GM10248 (cell line): ENCODE measurements at regions of chrX and their contacts with region 1.

Region 1: DNA sequence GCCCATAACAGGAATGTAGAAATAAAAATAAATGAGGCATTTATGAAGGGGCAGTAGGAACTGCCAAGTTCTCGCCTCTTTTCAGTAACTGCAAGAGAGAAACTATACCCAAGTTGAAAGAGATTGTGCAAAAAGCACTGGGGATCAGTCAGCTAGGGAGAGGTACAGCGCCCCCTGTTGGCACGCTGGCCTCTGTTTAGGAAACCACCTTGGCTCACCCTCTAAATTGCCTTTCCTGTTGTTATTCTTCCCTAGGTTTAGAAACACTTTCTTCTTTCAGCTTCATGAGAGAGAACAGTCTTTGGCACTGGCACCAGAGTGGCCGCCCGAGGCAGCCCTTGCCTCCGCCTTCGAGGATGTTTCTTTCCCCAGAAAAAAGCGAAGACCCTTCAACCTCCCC is 348.5 kb downstream of the MID1IP1 start:
- DNase-seq: peak; percentile 41
- CTCF ChIP-seq: peak; percentile 64

Region 2: GRCh38 chrX:38664285-38664684 is 485.5 kb before region 1 on chrX:
- CTCF ChIA-PET with region 1: interaction called, 10 read pairs
- POLR2A ChIA-PET with region 1: no interaction called
- DNase-seq: no peak
- CTCF ChIP-seq: peak; percentile 33

Region 3: DNA sequence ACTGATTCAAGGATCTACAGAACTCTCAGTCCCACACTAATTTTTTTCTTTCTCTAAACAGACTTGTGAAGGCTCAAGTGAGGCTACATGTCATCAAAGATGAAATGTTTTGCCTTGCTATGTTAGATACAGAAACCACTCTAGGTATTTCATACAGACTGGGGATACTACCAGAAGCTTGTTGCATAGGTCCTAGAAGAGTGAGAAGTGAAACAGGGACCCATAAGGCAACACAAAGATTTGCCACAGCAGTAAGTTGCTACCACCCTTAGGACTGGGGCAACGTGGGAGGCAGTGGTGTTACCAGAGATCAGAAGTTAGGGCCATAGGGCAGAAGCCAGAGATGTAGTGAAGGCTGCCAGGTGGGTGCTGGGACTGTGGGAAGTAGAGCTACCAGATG is 399.2 kb before region 1 on chrX:
- CTCF ChIA-PET with region 1: interaction called, 18 read pairs
- POLR2A ChIA-PET with region 1: no interaction called
- DNase-seq: no peak
- CTCF ChIP-seq: no peak

Region 4: GRCh38 chrX:38768079-38768478 is 381.7 kb before region 1 on chrX:
- CTCF ChIA-PET with region 1: interaction called, 47 read pairs
- POLR2A ChIA-PET with region 1: no interaction called
- DNase-seq: peak; percentile 10
- CTCF ChIP-seq: peak; percentile 28

Region 5: GRCh38 chrX:39029221-39029620 is 120.5 kb before region 1 on chrX:
- CTCF ChIA-PET with region 1: no interaction called
- POLR2A ChIA-PET with region 1: no interaction called
- DNase-seq: no peak
- CTCF ChIP-seq: no peak

Region 6: GRCh38 chrX:39112143-39112542 is 37.6 kb before region 1 on chrX:
- CTCF ChIA-PET with region 1: no interaction called
- POLR2A ChIA-PET with region 1: no interaction called
- DNase-seq: no peak
- CTCF ChIP-seq: no peak

Region 7: DNA sequence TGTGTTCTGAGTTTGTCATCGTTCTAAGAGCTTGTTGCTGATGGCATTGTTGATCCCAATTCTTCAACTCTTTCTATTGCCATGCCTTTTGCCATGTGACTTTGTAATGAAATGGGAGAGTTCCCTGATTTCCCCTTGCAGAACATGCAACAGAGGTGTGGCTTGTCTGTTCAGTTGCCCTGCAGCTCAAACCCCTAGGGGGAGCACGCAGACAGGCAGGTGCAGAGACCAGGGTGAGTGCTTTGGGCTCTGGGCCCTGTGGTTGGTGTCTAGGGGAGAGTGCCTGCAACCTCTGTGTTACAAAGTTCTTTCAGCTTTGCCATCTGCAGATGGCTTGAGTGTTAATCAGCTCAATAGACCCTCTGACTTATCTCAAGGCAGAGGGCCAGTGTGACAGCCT is 15.8 kb before region 1 on chrX:
- CTCF ChIA-PET with region 1: interaction called, 16 read pairs
- POLR2A ChIA-PET with region 1: no interaction called
- DNase-seq: no peak
- CTCF ChIP-seq: peak; percentile 41

Region 8: GRCh38 chrX:39162322-39162735 is 12.6 kb after region 1 on chrX:
- CTCF ChIA-PET with region 1: interaction called, 12 read pairs
- POLR2A ChIA-PET with region 1: no interaction called
- DNase-seq: peak; percentile 36
- CTCF ChIP-seq: peak; percentile 34

Region 9: GRCh38 chrX:39189431-39189830 is 39.7 kb after region 1 on chrX:
- CTCF ChIA-PET with region 1: no interaction called
- POLR2A ChIA-PET with region 1: no interaction called
- DNase-seq: no peak
- CTCF ChIP-seq: no peak